K562 (cell line): ENCODE measurements at regions of chr5 and their contacts with region 1.

Region 1: GRCh38 chr5:39117401-39117800 is 43.2 kb upstream of the RICTOR start:
- DNase-seq: peak in 2 of 4 experiments; percentile 67 to 86
- ATAC-seq: peak; percentile 31
- H3K4me3 ChIP-seq: no peak overlapping the region
- H3K27ac ChIP-seq: peak overlapping the region; percentile 55
- H3K4me1 ChIP-seq: peaks cover 10 to 60% of the 10 kb centered on the region in 2 experiments
- H3K27me3 ChIP-seq: no peaks in the 10 kb centered on the region
- CTCF ChIP-seq: no peak
- EP300 ChIP-seq: peak; percentile 92
- POLR2A ChIP-seq: no peak
- RAD21 ChIP-seq: no peak

Region 2: DNA sequence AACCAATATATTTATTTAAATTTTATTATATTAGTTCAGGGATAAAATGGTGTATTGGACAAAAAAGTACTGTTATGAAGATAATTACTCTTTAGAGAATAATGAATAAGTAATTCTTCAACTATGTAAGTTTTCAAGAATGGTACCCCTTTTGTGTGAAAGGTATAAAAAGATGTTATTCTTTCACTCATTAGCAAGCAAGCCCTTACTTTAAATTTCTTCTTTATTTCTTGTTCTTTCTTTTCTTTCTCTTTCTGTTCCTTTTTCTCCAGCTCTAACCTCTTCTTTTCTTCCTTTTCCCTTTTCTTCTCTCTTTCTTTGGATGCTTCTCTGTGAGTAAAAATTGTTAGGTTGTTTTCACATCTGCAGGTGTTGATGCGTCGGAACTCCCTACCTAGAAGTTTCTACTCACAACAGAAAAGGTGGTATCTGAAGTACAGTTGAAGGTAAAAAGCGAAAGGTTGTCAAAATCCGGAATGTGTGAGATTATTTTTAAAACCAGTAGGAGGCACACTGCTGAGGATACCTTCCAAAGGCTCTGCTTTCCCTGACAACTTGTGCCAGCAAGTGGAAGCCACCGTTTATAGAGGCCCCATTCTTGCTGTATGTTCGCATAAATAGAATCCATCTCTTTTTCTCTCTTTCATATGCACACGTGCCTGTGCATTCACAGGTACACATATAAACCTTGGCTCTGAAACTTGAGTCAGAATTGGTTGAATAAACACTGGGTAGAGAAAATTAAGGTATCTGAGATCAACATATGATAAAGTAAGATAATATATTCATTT is 20.2 kb after region 1 on chr5:
- CTCF ChIA-PET with region 1: no interaction called
- POLR2A ChIA-PET with region 1: no interaction called
- in situ Hi-C with region 1: no loop called
- intact Hi-C with region 1: loop called (anchors 1 kb)
- DNase-seq: peak in 2 of 4 experiments; percentile 49 to 66
- ATAC-seq: peak; percentile 91
- H3K4me3 ChIP-seq: no peak overlapping the region
- H3K27ac ChIP-seq: no peak overlapping the region
- H3K4me1 ChIP-seq: peaks cover 0 to 12% of the 10 kb centered on the region in 2 experiments; a peak in 2 of 5 replicates
- H3K27me3 ChIP-seq: no peaks in the 10 kb centered on the region
- CTCF ChIP-seq: peak; percentile 55 to 69 (median 67)
- EP300 ChIP-seq: 0 out of 2 replicates have a peak, but pooled peaks have one; percentile 2
- POLR2A ChIP-seq: no peak
- RAD21 ChIP-seq: peak; percentile 26 to 57; a peak in 1 of 4 replicates